ENCODE measurements at regions of chr18 and their contacts with region 1.

Region 1: DNA sequence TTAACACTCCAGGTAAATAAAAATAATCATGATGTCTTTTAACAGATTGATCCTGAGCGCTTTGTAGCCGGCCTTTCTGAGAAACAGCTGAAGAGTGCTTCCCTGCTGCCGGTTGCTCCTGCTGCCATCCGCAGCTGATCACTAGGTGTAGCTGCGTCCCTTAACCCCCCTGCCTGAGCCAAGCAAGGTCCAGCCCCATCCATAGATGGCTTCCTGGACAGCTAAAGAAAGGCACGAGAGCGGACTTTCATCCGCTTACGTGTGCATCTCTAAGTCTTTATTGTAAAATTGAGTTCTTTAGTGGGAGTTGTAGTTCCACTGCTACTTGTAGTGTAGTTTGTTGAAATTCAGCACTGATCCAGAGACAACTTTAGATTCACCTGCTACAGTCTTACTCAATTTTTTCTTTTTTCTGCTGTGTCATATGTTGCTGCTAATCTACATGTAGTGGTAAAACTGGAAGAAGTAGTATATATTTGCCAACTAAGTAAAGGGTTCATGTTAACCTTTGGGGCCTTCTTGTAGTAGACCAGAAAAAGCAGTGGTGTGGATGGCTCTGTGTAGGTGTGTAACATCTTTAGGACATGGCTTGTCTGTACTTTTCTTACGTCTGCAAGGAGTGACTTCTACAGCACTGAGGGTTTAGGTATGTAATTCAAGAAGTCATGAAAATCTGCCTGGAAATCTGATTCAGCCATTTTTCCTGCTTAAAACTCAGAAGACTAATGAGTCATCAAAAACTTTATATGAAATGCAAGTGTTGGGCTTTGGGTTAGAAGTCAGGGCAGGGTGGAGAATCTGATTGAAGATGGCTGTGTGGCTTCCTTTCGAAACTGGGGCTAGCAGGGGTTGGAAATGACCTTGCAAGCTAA is 8.3 kb downstream of the PTPRM start:
- DNase-seq: no peak
- ATAC-seq: peak in 7 of 8 donors; percentile 58 to 83 (median 76)
- H3K4me3 ChIP-seq: no peak overlapping the region
- H3K27ac ChIP-seq: peak overlapping the region in 2 of 10 donors; percentile 17 to 28
- H3K4me1 ChIP-seq: peaks cover 5 to 96% (median 68%) of the 10 kb centered on the region in 9 donors
- H3K27me3 ChIP-seq: peaks cover 0 to 4% (median 0%) of the 10 kb centered on the region in 7 donors
- CTCF ChIP-seq: peak in 7 of 9 donors; percentile 5 to 47 (median 25)

Region 2: DNA sequence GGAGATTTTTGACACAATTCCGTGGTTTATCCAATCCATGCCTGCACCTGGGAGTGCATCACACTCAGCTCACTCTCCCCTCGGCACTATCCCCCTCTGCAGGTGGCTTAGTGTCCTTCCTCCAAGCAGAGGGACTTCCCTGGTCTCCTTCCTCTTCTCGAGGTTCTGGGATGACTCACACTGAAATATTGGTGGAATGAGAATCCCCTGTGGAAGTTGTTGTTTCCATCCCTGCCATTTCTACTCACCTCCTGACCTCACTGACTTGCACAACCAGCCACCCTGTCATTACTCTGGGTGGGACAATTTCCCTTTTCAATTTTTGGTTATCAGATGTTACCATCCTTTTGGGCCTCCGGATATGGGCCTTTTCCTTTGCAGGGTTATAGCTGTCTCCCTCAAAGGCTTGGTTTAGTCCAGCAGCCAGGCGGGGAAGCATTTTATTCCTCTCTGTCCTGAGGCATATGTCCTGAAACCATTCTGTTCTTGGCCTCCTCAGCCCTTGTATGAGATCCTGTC is 51.6 kb after region 1 on chr18:
- intact Hi-C with region 1: loop called in 1 of 10 experiments (anchors 2 kb)
- DNase-seq: peak in 1 of 2 donors; percentile 34
- ATAC-seq: peak; percentile 42 to 70 (median 58)
- H3K4me3 ChIP-seq: no peak overlapping the region
- H3K27ac ChIP-seq: peak overlapping the region in 8 of 10 donors; percentile 16 to 62 (median 48)
- H3K4me1 ChIP-seq: peaks cover 25 to 99% (median 79%) of the 10 kb centered on the region in 9 donors
- H3K27me3 ChIP-seq: no peaks in the 10 kb centered on the region
- CTCF ChIP-seq: peak in 6 of 9 donors; percentile 17 to 40 (median 30)

Region 3: GRCh38 chr18:7645756-7646155 is 70.4 kb after region 1 on chr18:
- intact Hi-C with region 1: no loop called
- DNase-seq: peak in 1 of 2 donors; percentile 20
- ATAC-seq: peak in 5 of 8 donors; percentile 15 to 51 (median 35)
- H3K4me3 ChIP-seq: no peak overlapping the region
- H3K27ac ChIP-seq: peak overlapping the region in 1 of 10 donors; percentile 37
- H3K4me1 ChIP-seq: peaks cover 0 to 76% (median 54%) of the 10 kb centered on the region in 9 donors
- H3K27me3 ChIP-seq: no peaks in the 10 kb centered on the region
- CTCF ChIP-seq: no peak

Region 4: DNA sequence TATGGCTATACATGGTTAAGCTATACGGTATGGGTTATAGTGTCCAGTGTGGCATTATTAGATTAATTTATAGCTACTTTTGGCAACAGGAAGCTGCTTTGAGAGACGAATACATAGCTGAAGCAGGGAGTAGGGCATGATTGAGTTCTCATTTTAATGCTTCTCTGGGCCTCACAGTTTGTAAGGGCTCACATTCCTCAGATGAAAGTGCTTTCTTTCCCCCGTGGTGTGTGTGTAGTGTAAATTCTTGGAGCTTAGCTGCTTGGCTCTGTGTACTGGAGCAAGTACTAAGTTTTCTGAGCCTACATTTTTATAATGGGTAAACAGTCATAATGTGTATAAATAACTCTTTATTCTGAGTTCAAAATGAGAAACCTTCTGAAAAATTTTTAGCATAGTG is 165.4 kb after region 1 on chr18:
- intact Hi-C with region 1: loop called in 1 of 10 experiments (anchors 5 kb)
- DNase-seq: no peak
- ATAC-seq: peak in 3 of 8 donors; percentile 12 to 48 (median 25)
- H3K4me3 ChIP-seq: no peak overlapping the region
- H3K27ac ChIP-seq: peak overlapping the region in 9 of 10 donors; percentile 3 to 64 (median 53)
- H3K4me1 ChIP-seq: peaks cover 7 to 68% (median 51%) of the 10 kb centered on the region in 9 donors
- H3K27me3 ChIP-seq: no peaks in the 10 kb centered on the region
- CTCF ChIP-seq: no peak

Region 5: GRCh38 chr18:7755753-7756475 is 180.5 kb after region 1 on chr18:
- intact Hi-C with region 1: loop called in 3 of 10 experiments (anchors 5 to 10 kb)
- DNase-seq: no peak
- ATAC-seq: peak in 7 of 8 donors; percentile 41 to 77 (median 63)
- H3K4me3 ChIP-seq: no peak overlapping the region
- H3K27ac ChIP-seq: peak overlapping the region in 5 of 10 donors; percentile 29 to 59 (median 51)
- H3K4me1 ChIP-seq: peaks cover 8 to 86% (median 72%) of the 10 kb centered on the region in 9 donors
- H3K27me3 ChIP-seq: no peaks in the 10 kb centered on the region
- CTCF ChIP-seq: peak; percentile 19 to 60 (median 44)

Region 6: GRCh38 chr18:7950380-7951143 is 375.2 kb after region 1 on chr18:
- intact Hi-C with region 1: loop called in 1 of 10 experiments (anchors 10 kb)
- DNase-seq: no peak
- ATAC-seq: peak in 1 of 8 donors; percentile 25
- H3K4me3 ChIP-seq: no peak overlapping the region
- H3K27ac ChIP-seq: no peak overlapping the region
- H3K4me1 ChIP-seq: peaks cover 0 to 46% (median 19%) of the 10 kb centered on the region in 9 donors
- H3K27me3 ChIP-seq: no peaks in the 10 kb centered on the region
- CTCF ChIP-seq: no peak

Measured in heart right ventricle (tissue), 16 donors.